ENCODE measurements at regions of chr10 and their contacts with region 1.

Region 1: DNA sequence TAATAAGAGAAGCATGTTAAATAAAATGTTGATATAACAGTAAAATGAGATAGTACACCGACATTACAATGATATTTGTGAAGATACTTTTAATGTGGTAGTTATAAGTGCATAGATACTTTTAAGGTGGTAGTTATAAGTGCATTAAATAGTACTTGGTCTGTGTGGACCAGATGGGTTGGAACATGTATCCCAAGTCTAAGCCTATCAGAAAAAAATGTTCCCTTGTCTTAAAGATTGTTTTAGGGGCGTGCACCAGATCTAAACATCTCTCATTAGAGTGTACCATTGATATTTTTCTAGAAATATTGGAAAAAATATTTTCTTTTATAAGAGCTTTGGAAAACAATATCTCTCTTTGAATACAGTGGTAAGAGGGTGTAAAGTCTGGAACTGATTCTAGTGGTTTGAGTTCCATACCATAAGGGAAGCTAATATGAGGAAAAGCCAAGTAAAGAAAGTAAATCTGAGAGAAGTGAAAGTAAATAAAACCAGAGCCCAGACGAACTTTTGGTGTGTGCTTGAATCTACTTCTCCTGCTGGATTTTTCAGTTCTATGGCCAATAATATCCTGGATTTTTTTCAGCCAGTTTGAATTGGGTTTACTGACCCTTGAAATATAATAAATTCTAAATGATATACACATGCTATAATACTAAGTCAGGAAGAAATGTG is 175.3 kb downstream of the MBL2 start:
- DNase-seq: no peak
- H3K4me3 ChIP-seq: peak overlapping the region; percentile 38
- CTCF ChIP-seq: no peak

Region 2: DNA sequence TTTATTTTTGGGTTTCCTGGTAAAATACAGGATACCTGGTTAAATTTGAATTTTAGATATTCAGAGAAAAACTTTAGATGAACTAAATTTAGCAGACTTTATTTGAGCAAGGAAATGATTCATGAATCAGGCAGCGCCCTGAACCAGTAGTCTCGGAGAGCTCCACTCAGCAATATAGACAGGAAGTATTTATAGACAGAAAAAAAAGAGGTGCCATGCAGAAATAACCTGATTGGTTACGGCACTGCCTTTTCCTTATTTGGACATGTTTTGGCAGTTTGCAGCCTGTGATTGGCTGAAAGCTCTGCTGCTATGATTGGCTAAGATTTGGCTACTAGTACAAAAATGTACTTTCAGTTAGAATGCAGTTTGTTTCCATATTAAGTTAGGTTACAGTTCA is 481.5 kb before region 1 on chr10:
- CTCF ChIA-PET with region 1: no interaction called
- POLR2A ChIA-PET with region 1: no interaction called
- DNase-seq: no peak
- H3K4me3 ChIP-seq: no peak overlapping the region
- CTCF ChIP-seq: no peak

Region 3: DNA sequence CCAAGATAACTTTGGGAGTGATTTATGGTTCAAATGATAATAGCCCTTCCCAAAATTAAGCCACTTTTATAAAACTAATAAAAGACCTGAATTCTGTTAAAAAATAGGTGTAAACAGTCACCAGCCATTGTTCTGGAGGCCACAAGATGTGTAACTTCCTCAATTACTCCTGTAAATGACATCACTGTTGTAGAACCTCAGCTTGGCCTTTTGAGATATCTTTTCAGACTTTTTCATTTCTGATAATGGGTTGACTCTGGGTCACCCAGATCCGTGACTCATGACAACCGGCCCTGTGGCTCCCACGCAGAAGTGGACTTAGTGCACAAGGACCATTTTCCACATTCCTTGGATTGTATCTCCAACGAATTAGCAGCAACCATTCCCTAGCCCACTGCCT is 176.7 kb before region 1 on chr10:
- CTCF ChIA-PET with region 1: no interaction called
- POLR2A ChIA-PET with region 1: no interaction called
- DNase-seq: no peak
- H3K4me3 ChIP-seq: no peak overlapping the region
- CTCF ChIP-seq: no peak

Region 4: GRCh38 chr10:52566471-52567246 is 30.7 kb before region 1 on chr10:
- CTCF ChIA-PET with region 1: interaction called, 11 read pairs
- POLR2A ChIA-PET with region 1: no interaction called
- DNase-seq: no peak
- H3K4me3 ChIP-seq: no peak overlapping the region
- CTCF ChIP-seq: peak; percentile 13

Region 5: GRCh38 chr10:52578871-52579405 is 18.4 kb before region 1 on chr10:
- CTCF ChIA-PET with region 1: interaction called, 11 read pairs
- POLR2A ChIA-PET with region 1: no interaction called
- DNase-seq: no peak
- H3K4me3 ChIP-seq: no peak overlapping the region
- CTCF ChIP-seq: no peak

Region 6: GRCh38 chr10:52615756-52616394 is 18.5 kb after region 1 on chr10:
- CTCF ChIA-PET with region 1: interaction called, 11 read pairs
- POLR2A ChIA-PET with region 1: no interaction called
- DNase-seq: no peak
- H3K4me3 ChIP-seq: no peak overlapping the region
- CTCF ChIP-seq: no peak

Measured in AG04449 (cell line).